ENCODE measurements at regions of chr9 and their contacts with region 1.

Region 1: GRCh38 chr9:121992571-121993212 is 100.4 kb downstream of the TTLL11 start:
- DNase-seq: no peak
- ATAC-seq: peak; percentile 88
- H3K4me3 ChIP-seq: no peak overlapping the region
- H3K27ac ChIP-seq: no peak overlapping the region
- H3K4me1 ChIP-seq: peaks cover under 1% of the 10 kb centered on the region
- H3K27me3 ChIP-seq: no peaks in the 10 kb centered on the region
- CTCF ChIP-seq: peak; percentile 88

Region 2: DNA sequence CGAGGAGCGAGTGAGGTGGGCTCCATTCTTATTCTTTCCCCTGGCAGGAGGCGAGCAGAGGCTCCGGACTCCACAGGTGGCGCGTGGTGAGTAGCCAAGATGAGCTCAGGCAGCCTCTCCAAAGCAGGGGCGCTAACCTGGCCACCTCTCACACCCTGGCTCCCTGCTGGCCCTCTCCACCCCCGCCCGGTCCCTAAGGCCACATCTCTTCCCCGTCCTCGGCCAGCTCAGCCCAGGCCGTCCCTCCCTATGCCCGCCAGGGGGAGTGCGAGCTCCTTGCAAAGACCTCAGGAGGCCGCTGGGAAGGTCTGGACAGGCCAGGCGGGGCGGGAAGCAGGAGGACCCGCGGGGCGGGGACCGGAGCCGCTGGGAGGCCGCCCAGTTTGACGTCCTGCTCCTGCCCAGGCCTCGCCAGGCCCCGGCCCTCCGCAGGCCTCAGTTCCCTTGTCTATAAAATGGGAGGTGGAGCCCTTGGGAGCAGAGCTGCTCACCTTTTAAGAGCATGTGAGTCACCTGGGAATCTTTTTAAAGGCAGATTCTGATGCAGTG is 446.7 kb before region 1 on chr9:
- intact Hi-C with region 1: loop called (anchors 10 kb)
- DNase-seq: peak; percentile 98
- ATAC-seq: peak; percentile 98
- H3K4me3 ChIP-seq: peak overlapping the region; percentile 39
- H3K27ac ChIP-seq: no peak overlapping the region
- H3K4me1 ChIP-seq: peaks cover 15% of the 10 kb centered on the region
- H3K27me3 ChIP-seq: no peaks in the 10 kb centered on the region
- CTCF ChIP-seq: peak; percentile 97

Region 3: GRCh38 chr9:121686930-121687541 is 305.7 kb before region 1 on chr9:
- intact Hi-C with region 1: loop called (anchors 5 kb)
- DNase-seq: peak; percentile 85
- ATAC-seq: peak; percentile 88
- H3K4me3 ChIP-seq: no peak overlapping the region
- H3K27ac ChIP-seq: no peak overlapping the region
- H3K4me1 ChIP-seq: peaks cover 5% of the 10 kb centered on the region
- H3K27me3 ChIP-seq: no peaks in the 10 kb centered on the region
- CTCF ChIP-seq: peak; percentile 88

Region 4: DNA sequence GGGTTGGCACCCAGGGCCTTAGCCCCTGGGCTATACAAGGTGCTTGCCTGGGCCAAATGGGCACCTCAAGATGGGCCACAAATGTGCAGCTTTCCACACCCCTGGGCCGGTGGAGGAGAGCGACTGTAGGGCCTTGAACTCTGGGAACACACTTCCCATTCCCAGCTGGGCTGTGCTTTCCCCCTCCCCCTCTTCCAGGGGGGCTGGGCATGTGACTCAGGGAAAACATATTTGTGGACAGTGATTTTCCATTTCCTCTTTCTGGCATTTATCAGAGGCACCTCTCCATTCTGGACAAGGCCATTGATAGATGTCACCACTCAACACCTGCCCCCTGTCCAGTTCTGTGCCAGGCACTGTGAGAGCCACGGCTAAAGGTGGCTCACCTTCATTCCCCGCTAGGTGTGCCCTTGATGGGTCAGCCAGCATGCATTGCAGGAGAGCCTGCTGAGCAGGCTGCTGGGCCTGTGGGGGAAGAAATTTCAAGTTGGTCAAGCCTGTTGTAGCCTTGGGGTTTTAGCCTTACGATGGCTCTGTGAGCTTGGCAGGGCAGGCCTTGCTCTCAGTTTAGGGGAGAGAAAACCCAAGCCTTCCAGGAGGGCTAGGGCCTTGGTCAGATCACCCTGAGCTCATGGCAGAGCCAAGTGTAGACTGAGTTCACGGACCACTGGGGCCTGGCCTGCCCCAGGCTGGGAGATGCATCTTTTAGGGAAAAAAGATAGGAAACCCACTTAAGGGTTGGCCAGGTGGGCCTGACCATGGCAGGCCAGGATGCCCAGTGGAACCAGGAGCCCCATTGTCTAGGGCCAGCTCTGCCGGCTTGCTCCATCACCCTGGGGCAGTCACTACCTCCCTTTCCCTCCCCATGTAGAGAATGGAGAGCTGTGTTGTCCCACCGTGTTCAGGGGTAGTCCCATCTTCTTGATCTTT is 227.4 kb before region 1 on chr9:
- intact Hi-C with region 1: loop called (anchors 5 kb)
- DNase-seq: no peak
- ATAC-seq: peak; percentile 39
- H3K4me3 ChIP-seq: no peak overlapping the region
- H3K27ac ChIP-seq: peak overlapping the region; percentile 51
- H3K4me1 ChIP-seq: peaks cover 16% of the 10 kb centered on the region
- H3K27me3 ChIP-seq: no peaks in the 10 kb centered on the region
- CTCF ChIP-seq: no peak